ENCODE measurements at regions of chr10 and their contacts with region 1.

Region 1: GRCh38 chr10:110210674-110211464 is 3.5 kb downstream of the MXI1 start:
- DNase-seq: peak; percentile 94
- H3K4me3 Mint-ChIP-seq: peak overlapping the region; percentile 87
- H3K27ac Mint-ChIP-seq: peak overlapping the region; percentile 95
- H3K4me1 Mint-ChIP-seq: peaks cover 57% of the 10 kb centered on the region
- H3K27me3 Mint-ChIP-seq: peaks cover 6% of the 10 kb centered on the region

Region 2: DNA sequence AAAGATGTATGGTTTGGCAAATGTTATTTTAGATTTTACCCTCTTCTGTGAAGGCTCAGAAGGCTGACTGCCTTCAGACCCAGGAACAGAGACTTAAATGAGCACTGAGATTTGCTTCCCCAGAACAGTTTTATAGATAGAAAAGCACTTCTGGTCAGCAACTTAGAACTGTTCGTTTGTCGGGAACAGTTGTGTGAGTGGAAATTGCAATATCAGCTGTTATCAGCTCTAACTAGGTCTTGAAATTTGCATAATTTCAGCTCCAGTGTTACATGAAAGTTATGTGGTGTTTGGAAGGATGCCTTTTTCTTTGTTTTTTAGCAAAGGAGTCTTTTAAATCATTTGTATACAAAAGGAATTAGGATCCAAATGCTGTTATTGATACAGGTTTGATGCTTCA is 87.3 kb before region 1 on chr10:
- CTCF ChIA-PET with region 1: no interaction called
- POLR2A ChIA-PET with region 1: no interaction called
- DNase-seq: no peak
- H3K4me3 Mint-ChIP-seq: no peak overlapping the region
- H3K27ac Mint-ChIP-seq: no peak overlapping the region
- H3K4me1 Mint-ChIP-seq: no peaks in the 10 kb centered on the region
- H3K27me3 Mint-ChIP-seq: no peaks in the 10 kb centered on the region

Region 3: DNA sequence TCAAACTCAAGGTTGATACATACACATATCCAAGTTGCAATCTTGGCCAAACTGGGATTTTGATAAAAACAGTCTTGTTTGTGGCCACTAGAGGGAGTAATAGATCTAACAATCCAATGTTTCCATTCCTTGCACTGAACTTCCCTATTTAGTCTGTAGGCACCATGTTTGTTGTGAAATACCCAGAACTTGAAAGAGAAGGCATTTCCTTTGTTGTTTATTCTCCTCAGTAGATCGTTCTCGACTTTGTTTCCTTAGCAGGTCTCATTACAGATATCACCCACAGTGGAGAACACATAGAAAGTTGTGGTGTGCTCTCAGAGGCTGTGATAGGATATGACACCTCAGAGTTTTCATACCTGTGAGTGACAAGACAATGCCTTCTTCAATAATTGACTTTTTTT is 73.7 kb before region 1 on chr10:
- CTCF ChIA-PET with region 1: interaction called, 39 read pairs
- POLR2A ChIA-PET with region 1: interaction called, 36 read pairs
- DNase-seq: no peak
- H3K4me3 Mint-ChIP-seq: no peak overlapping the region
- H3K27ac Mint-ChIP-seq: peak overlapping the region; percentile 32
- H3K4me1 Mint-ChIP-seq: peaks cover 41% of the 10 kb centered on the region
- H3K27me3 Mint-ChIP-seq: no peaks in the 10 kb centered on the region

Region 4: DNA sequence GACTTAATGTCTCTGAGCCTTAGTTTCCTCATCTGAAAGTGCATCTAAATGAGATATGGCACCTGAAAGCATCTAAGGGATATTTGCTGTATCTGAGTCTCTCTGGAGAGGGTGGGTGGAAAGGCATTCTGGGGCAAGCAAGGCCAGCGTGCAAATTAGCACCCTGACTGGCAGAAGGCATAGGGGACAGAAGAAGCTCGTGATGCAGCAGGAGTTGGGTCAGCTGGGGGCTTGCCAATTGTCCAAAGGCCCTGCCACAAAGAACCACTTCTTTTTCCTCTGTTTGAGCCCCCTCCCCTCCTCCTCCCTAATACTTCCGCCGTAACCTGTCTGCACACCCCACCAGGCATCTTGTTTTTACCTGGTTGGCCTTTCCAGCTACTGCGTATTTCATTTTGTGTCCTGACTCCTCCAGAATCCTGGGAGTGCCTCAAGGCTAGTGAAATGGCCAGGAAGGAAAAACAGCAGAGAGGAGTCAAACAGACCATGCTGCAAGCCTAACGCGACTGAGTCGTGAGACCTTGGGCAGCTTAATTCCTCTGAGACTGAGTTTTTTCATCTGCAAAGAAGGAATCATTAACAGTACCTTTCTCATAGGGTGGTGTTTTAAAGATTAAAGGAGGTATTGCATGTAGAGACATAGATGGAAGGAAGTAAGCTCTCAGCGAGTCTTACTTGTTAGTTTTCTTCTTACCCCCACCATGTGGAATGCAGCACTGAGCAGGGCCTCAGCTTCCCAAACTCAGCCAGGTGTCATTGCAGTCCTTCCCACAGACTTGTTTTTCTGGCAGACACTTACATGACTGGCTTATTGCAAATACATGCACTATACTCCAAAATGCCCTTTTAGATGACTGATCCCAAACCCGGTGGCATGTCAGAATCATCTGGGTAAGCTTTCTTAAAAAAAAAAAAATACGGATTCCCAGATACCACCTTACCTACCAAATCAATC is 52.5 kb before region 1 on chr10:
- CTCF ChIA-PET with region 1: interaction called, 10 read pairs
- POLR2A ChIA-PET with region 1: interaction called, 71 read pairs
- DNase-seq: no peak
- H3K4me3 Mint-ChIP-seq: no peak overlapping the region
- H3K27ac Mint-ChIP-seq: peak overlapping the region; percentile 95
- H3K4me1 Mint-ChIP-seq: peaks cover 52% of the 10 kb centered on the region
- H3K27me3 Mint-ChIP-seq: peaks cover 70% of the 10 kb centered on the region

Region 5: GRCh38 chr10:110225756-110226542 is 15.1 kb after region 1 on chr10:
- CTCF ChIA-PET with region 1: interaction called, 179 read pairs
- POLR2A ChIA-PET with region 1: interaction called, 222 read pairs
- DNase-seq: peak; percentile 88
- H3K4me3 Mint-ChIP-seq: peak overlapping the region; percentile 88
- H3K27ac Mint-ChIP-seq: peak overlapping the region; percentile 82
- H3K4me1 Mint-ChIP-seq: peaks cover 53% of the 10 kb centered on the region
- H3K27me3 Mint-ChIP-seq: no peaks in the 10 kb centered on the region

Region 6: DNA sequence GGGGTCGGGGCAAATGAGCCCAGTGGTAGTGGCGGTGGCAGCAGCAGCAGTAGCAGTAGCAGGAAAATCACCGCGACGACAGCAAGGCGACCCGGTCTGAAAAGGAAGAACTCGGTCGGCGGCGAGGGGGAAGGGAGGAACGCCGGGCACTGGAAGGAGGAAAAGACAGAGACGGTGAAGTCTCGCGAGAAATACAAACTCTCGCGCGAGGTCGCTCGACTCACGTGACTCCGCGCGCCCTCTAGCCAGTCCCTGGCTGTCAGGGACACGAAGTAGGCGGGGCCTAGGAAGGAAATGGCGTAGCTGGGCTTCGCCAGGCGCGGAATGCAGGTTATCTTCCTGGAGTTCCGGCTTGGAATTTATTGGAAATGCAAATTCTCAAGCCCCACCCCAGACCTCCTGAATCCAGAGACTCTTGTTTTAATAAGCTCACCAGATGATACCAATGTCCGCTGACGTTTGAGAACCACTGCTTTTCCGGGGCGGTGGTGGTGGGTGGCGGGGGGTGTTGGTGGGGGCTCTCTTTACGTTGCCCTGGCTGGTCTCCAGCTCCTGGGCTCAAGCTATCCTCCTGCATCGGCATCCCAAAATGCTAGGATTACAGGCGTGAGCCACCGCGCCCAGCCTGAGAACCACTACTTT is 94.0 kb after region 1 on chr10 and contains the start of gene SMNDC1:
- CTCF ChIA-PET with region 1: interaction called, 6 read pairs
- POLR2A ChIA-PET with region 1: interaction called, 30 read pairs
- DNase-seq: peak; percentile 98
- H3K4me3 Mint-ChIP-seq: peak within 1 kb of the TSS; percentile 97
- H3K27ac Mint-ChIP-seq: peak within 1 kb of the TSS; percentile 96
- H3K4me1 Mint-ChIP-seq: peaks cover 55% of the 10 kb centered on the region
- H3K27me3 Mint-ChIP-seq: no peaks in the 10 kb centered on the region
- total RNA-seq, gene SMNDC1: 40.8 to 45.6 TPM